RWPE1 (cell line): ENCODE measurements at regions of chr9 and their contacts with region 1.

Region 1: DNA sequence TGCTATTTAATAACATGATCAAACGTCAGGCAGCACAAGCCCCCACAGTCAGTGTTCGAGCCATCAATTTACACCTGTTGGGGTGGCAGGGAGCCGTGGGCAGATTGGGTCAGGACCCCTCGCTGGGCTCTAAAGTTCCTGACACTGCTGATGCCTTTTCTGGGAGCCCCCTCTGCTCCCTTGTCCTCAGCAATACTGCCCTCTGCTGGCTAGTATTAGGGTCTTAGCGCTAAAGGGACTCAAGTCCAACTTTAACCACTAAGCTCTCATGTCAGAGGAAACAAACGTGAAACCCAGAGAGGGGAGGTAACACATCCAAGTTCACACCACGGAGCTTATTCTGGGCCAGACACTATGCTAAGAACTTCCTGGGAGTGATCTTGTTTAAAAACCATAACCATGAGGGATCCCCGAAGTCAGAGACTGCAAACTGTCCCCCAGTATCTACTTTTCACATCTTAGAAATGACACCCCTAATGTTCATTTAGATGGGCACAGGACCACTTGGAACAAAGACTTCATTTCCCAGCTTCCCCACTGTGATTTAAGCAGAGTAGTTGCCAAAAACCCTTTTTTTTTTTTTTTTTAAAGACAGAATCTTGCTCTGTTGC is 20.4 kb downstream of the ANKS6 start:
- DNase-seq: peak; percentile 73
- H3K27ac ChIP-seq: no peak overlapping the region
- CTCF ChIP-seq: peak; percentile 82

Region 2: DNA sequence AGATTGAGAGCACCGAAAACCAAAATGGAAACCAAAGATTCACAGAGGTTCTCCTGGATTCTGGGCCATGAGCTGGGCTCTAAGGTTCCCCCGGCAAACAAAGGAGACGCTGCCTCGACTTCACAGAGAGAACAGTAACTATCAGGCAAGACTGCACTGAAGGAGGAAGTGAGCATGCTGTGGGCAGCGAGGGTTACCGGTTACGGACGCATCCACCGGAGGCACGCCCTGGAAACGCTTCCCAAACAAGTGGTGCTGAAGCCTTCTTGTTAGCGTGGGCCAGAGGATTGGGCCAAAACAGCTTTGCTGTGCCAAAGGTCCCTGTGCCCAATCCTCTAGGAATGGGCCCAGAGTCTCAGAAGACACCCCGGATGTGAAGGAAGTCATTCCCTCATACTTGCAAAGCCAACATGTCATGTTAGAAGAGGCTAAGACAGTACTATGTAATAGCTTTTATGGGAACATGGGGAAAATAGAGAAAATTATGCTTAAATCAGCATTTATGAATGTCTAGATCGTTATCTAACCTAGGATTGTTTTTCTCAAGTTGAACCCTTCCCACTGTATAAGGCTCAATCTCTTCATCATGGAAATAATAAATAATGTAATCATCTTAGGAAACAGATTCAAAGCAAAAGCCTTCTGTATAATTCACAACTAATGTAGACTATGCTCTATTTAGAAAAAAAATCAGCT is 212.6 kb before region 1 on chr9:
- CTCF ChIA-PET with region 1: interaction called, 12 read pairs
- POLR2A ChIA-PET with region 1: no interaction called
- DNase-seq: no peak
- H3K27ac ChIP-seq: no peak overlapping the region
- CTCF ChIP-seq: no peak

Region 3: DNA sequence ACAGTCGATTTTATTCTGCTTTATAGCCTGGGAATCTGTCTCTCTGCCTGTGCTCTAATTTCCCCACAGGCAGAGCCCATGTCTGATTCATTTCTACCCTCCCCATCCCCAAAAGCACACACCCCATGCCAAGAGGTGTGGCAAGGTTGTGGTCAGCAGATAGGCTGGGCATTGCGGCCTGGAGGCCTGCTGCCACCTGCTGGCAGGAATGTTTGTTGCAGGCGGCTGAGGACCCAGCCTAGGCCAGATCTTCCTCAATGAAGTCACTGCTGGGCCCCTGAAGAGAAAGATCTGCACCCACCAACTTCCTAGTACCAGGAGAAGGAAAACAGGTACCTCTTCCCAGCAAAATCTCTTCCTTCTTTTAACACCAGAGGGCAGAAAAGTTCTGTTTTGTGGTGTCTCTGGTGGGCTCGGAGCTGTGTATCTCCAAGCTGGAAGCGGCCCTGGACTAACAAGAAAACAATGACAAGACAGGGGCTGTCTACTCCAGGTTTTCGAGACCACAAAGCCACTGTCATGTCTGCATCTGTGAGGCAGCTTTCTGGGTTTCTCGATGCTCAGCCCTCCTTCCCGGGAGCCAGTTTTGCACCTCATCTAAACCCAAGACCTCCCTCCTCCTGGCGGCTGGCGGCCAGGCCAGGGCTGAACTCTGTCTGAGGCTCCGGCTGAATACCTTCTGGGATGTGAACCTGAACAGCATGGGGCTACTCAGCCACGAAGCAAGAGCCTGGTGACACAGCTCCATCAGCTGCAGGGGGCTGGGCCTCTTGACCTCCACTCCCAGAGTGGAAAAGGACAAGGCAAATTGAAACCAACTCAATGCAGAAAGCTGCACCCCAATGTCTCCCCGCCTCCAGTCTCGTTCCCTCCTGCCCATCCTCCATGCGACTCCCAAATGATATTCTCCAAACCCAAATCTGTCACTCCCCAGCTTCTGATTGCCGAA is 15.5 kb after region 1 on chr9:
- CTCF ChIA-PET with region 1: interaction called, 10 read pairs
- POLR2A ChIA-PET with region 1: no interaction called
- DNase-seq: peak; percentile 99
- H3K27ac ChIP-seq: peak overlapping the region; percentile 63
- CTCF ChIP-seq: peak; percentile 100

Region 4: GRCh38 chr9:98838155-98838867 is 62.4 kb after region 1 on chr9:
- CTCF ChIA-PET with region 1: no interaction called
- POLR2A ChIA-PET with region 1: no interaction called
- DNase-seq: no peak
- H3K27ac ChIP-seq: no peak overlapping the region
- CTCF ChIP-seq: no peak